ENCODE measurements at regions of chr12 and their contacts with region 1.

Region 1: GRCh38 chr12:118120579-118121363 is 15.2 kb upstream of the PEBP1 start:
- DNase-seq: peak; percentile 77 to 79
- H3K4me3 ChIP-seq: peak overlapping the region in 2 of 4 experiments; percentile 32 to 43; a peak in 3 of 8 replicates
- H3K27ac ChIP-seq: peak overlapping the region; percentile 86
- H3K4me1 ChIP-seq: peaks cover 2 to 12% (median 8%) of the 10 kb centered on the region in 4 experiments
- H3K27me3 ChIP-seq: no peaks in the 10 kb centered on the region
- CTCF ChIP-seq: peak; percentile 47 to 52 (median 47)
- EP300 ChIP-seq: no peak
- POLR2A ChIP-seq: 0 out of 3 replicates have a peak, but pooled peaks of 1 of the 2 experiments have one; percentile 14
- RAD21 ChIP-seq: peak; percentile 60 to 62

Region 2: GRCh38 chr12:117360551-117361346 is 760.0 kb before region 1 on chr12:
- CTCF ChIA-PET with region 1: no interaction called
- POLR2A ChIA-PET with region 1: no interaction called
- DNase-seq: peak in 1 of 2 experiments; percentile 81
- H3K4me3 ChIP-seq: peak overlapping the region; percentile 71 to 84 (median 80)
- H3K27ac ChIP-seq: no peak overlapping the region
- H3K4me1 ChIP-seq: peaks cover 0 to 3% (median 2%) of the 10 kb centered on the region in 4 experiments; a peak in 3 of 7 replicates
- H3K27me3 ChIP-seq: peaks cover 27 to 73% (median 59%) of the 10 kb centered on the region in 4 experiments
- CTCF ChIP-seq: no peak
- EP300 ChIP-seq: no peak
- POLR2A ChIP-seq: no peak
- RAD21 ChIP-seq: no peak

Region 3: GRCh38 chr12:118013283-118013682 is 107.5 kb before region 1 on chr12:
- CTCF ChIA-PET with region 1: no interaction called
- POLR2A ChIA-PET with region 1: no interaction called
- DNase-seq: no peak
- H3K4me3 ChIP-seq: no peak overlapping the region
- H3K27ac ChIP-seq: no peak overlapping the region
- H3K4me1 ChIP-seq: no peaks in the 10 kb centered on the region; a peak in 1 of 7 replicates
- H3K27me3 ChIP-seq: no peaks in the 10 kb centered on the region
- CTCF ChIP-seq: no peak
- EP300 ChIP-seq: no peak
- POLR2A ChIP-seq: no peak
- RAD21 ChIP-seq: no peak

Region 4: DNA sequence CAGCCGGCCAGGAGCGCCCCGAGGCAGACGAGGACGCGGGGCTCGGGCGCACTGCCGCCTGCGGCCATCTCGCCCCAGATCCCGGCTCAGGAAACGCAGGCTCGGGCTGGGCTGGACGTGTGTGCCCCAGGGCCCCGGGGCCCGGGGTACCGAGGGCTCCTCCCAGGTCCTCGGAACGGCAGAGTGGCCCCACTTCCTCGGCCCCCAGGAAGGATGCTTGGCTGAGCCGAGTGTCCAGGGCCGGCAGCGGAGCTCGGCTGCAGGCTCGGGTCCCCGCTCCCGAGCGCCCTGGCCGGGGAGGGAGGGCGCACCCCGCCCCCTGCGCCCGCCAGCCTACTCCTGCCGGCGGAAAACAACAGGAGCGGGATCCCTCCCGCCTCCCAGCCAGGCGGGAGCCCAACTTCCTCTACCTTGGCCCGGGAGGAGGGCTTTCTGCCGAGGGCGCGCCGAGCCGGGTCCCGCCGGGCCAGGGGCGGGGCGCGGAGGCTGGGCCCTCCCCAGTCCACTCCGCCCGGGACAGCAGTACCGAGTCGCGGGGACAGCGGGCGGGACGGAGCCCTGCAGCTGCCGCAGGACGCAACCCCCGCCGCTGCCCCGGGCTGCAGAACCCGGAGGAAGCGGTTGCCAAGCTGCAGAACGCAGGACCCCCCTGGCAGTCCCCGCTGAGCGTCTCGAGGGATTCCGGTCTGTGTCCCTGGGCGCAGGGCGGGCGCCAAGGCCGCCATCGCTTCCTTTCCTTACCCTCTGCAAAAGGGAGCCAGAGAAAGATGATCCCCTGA is 17.0 kb before region 1 on chr12 and contains the start of gene VSIG10:
- CTCF ChIA-PET with region 1: interaction called, 11 read pairs
- POLR2A ChIA-PET with region 1: interaction called, 50 read pairs
- DNase-seq: peak in 1 of 2 experiments; percentile 80
- H3K4me3 ChIP-seq: peak within 1 kb of the TSS; percentile 81 to 91 (median 87)
- H3K27ac ChIP-seq: peak within 1 kb of the TSS; percentile 91; the same call in 1 of the 2 replicates
- H3K4me1 ChIP-seq: peaks cover 0 to 9% (median 4%) of the 10 kb centered on the region in 4 experiments; a peak in 4 of 7 replicates
- H3K27me3 ChIP-seq: no peaks in the 10 kb centered on the region
- CTCF ChIP-seq: no peak
- EP300 ChIP-seq: no peak
- POLR2A ChIP-seq: no peak; a peak in 1 of 3 replicates
- RAD21 ChIP-seq: no peak
- total RNA-seq, gene VSIG10: 93.6 and 96.8 TPM in 2 replicates

Region 5: GRCh38 chr12:118109088-118109487 is 11.7 kb before region 1 on chr12:
- CTCF ChIA-PET with region 1: interaction called, 11 read pairs
- POLR2A ChIA-PET with region 1: interaction called, 50 read pairs
- DNase-seq: no peak
- H3K4me3 ChIP-seq: no peak overlapping the region
- H3K27ac ChIP-seq: no peak overlapping the region
- H3K4me1 ChIP-seq: no peaks in the 10 kb centered on the region; a peak in 1 of 7 replicates
- H3K27me3 ChIP-seq: no peaks in the 10 kb centered on the region
- CTCF ChIP-seq: no peak
- EP300 ChIP-seq: no peak
- POLR2A ChIP-seq: no peak
- RAD21 ChIP-seq: no peak

Region 6: DNA sequence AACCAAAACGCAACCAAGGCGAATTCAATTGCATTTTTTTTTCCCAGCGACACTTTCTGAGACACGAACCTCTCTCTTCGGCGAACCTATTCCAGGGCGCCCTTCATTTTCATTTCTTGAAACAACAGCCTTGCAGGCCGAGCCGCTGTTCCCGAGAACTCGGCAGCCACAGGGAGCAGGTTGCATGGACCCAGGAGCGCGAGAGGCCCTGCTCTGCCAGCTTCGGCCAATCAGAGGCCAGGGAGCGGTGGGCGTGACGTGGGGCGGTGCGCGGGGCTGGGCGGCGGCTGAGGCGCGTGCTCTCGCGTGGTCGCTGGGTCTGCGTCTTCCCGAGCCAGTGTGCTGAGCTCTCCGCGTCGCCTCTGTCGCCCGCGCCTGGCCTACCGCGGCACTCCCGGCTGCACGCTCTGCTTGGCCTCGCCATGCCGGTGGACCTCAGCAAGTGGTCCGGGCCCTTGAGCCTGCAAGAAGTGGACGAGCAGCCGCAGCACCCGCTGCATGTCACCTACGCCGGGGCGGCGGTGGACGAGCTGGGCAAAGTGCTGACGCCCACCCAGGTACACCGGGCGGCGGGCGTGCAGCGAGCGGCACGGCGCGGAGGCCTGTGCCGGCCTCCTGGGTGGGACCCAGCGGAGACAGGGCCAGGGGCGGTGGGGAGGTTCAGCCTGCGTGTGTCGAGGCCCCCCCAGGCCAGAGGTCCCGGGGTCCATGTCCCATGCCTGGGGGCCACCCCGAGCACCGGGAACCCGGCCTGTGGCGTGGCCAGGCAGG is 15.2 kb after region 1 on chr12 and contains the start of gene PEBP1:
- CTCF ChIA-PET with region 1: interaction called, 24 read pairs
- POLR2A ChIA-PET with region 1: interaction called, 130 read pairs
- DNase-seq: peak; percentile 60 to 88
- H3K4me3 ChIP-seq: peak within 1 kb of the TSS; percentile 86 to 97 (median 91)
- H3K27ac ChIP-seq: peak within 1 kb of the TSS; percentile 78
- H3K4me1 ChIP-seq: peaks cover 0 to 3% (median under 1%) of the 10 kb centered on the region in 4 experiments; a peak in 4 of 7 replicates
- H3K27me3 ChIP-seq: no peaks in the 10 kb centered on the region
- CTCF ChIP-seq: 0 out of 4 replicates have a peak, but pooled peaks of 1 of the 3 experiments have one; percentile 6
- EP300 ChIP-seq: no peak
- POLR2A ChIP-seq: peak; percentile 50 to 68
- RAD21 ChIP-seq: no peak
- total RNA-seq, gene PEBP1: 444 and 458 TPM in 2 replicates

Region 7: GRCh38 chr12:118145113-118145797 is 24.5 kb after region 1 on chr12:
- CTCF ChIA-PET with region 1: interaction called, 13 read pairs
- POLR2A ChIA-PET with region 1: interaction called, 130 read pairs
- DNase-seq: no peak
- H3K4me3 ChIP-seq: no peak overlapping the region
- H3K27ac ChIP-seq: no peak overlapping the region
- H3K4me1 ChIP-seq: no peaks in the 10 kb centered on the region
- H3K27me3 ChIP-seq: no peaks in the 10 kb centered on the region
- CTCF ChIP-seq: no peak
- EP300 ChIP-seq: no peak
- POLR2A ChIP-seq: no peak
- RAD21 ChIP-seq: no peak